A549 (cell line): ENCODE measurements at regions of chr5 and their contacts with region 1.

Region 1: GRCh38 chr5:172106511-172107356 is 81.3 kb downstream of the STK10 start:
- DNase-seq: peak; percentile 40 to 58
- ATAC-seq: peak in 1 of 2 experiments; percentile 70; a peak in 3 of 6 replicates
- H3K4me3 ChIP-seq: peak overlapping the region; percentile 34
- H3K27ac ChIP-seq: peak overlapping the region; percentile 46 to 73
- H3K4me1 ChIP-seq: peaks cover 36% of the 10 kb centered on the region
- CTCF ChIP-seq: peak; percentile 93
- EP300 ChIP-seq: no peak
- POLR2A ChIP-seq: no peak
- RAD21 ChIP-seq: peak; percentile 77 to 93

Region 2: GRCh38 chr5:172090976-172091547 is 15.7 kb before region 1 on chr5:
- CTCF ChIA-PET with region 1: interaction called, 17 read pairs
- POLR2A ChIA-PET with region 1: no interaction called
- DNase-seq: no peak
- ATAC-seq: no peak
- H3K4me3 ChIP-seq: no peak overlapping the region
- H3K27ac ChIP-seq: no peak overlapping the region
- H3K4me1 ChIP-seq: no peaks in the 10 kb centered on the region
- CTCF ChIP-seq: no peak
- EP300 ChIP-seq: no peak
- POLR2A ChIP-seq: no peak
- RAD21 ChIP-seq: no peak

Region 3: DNA sequence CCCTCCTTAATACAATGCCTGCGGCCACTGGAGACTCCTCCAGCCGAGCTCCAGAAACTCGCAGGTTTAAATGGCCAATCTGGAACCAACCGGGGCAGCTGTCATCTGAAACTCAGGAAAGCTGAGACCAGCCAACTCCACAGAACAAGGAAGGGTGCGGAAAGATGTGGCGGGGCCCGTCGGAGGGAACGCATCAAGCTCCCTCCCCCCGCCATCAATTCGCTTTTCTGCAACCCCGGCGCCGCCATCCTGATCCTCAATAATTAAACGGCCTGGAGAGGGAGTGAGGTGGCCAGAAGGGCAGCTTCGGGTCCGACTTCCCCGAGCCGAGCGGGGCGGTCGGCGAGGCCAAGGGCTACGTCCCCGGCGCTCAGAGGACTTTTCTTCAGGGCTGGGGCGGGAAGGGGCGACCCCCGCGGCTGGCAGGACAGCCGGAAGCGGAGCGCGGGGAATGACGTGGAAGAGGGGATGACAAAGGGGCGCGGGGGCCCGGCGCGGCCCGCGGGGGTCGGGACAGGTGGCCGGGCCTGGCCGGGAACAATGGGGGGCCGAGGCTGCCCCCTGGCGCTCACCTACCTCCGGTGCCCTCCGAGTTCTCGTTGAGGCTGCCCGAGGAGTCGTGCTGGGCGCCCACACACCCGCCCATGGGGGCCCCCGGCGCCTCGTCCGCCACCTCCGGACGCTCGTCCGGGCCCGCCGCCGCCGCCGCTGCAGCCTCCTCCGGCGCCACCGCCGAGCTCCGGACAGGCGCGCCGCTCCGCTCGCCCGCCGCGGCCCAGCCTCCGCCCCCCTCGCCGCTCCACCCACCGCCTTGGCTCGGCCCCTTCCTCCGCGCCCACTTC is 176.5 kb after region 1 on chr5 and contains the start of gene UBTD2:
- CTCF ChIA-PET with region 1: interaction called, 18 read pairs
- POLR2A ChIA-PET with region 1: interaction called, 3 read pairs
- DNase-seq: peak; percentile 81 to 87
- ATAC-seq: peak; percentile 81 to 90
- H3K4me3 ChIP-seq: peak within 1 kb of the TSS; percentile 57
- H3K27ac ChIP-seq: peak within 1 kb of the TSS; percentile 95 to 98
- H3K4me1 ChIP-seq: peaks cover 24% of the 10 kb centered on the region
- CTCF ChIP-seq: peak; percentile 68
- EP300 ChIP-seq: no peak
- POLR2A ChIP-seq: no peak; the same call in 1 of the 2 replicates
- RAD21 ChIP-seq: peak; percentile 29 to 74; a peak in 4 of 5 replicates
- polyA plus RNA-seq, gene UBTD2: 20.9 and 22.8 TPM in 2 replicates

Region 4: GRCh38 chr5:172293054-172293744 is 186.5 kb after region 1 on chr5:
- CTCF ChIA-PET with region 1: interaction called, 15 read pairs
- POLR2A ChIA-PET with region 1: no interaction called
- DNase-seq: peak; percentile 58 to 73
- ATAC-seq: peak; percentile 99
- H3K4me3 ChIP-seq: no peak overlapping the region
- H3K27ac ChIP-seq: 0 out of 6 replicates have a peak overlapping the region, but pooled peaks of 1 of the 2 experiments have one; percentile 2
- H3K4me1 ChIP-seq: no peaks in the 10 kb centered on the region; the same call in 2 of the 3 replicates
- CTCF ChIP-seq: peak; percentile 93
- EP300 ChIP-seq: no peak
- POLR2A ChIP-seq: no peak
- RAD21 ChIP-seq: peak; percentile 87 to 96